Transverse colon (tissue), 4 donors: ENCODE measurements at regions of chr15 and their contacts with region 1.

Region 1: GRCh38 chr15:85388566-85389305 is 8.3 kb downstream of the AKAP13 start:
- DNase-seq: no peak
- H3K4me3 ChIP-seq: no peak overlapping the region
- H3K27ac ChIP-seq: no peak overlapping the region
- H3K4me1 ChIP-seq: peaks cover 3 to 35% (median 9%) of the 10 kb centered on the region in 4 donors
- H3K27me3 ChIP-seq: no peaks in the 10 kb centered on the region
- CTCF ChIP-seq: no peak
- EP300 ChIP-seq: no peak
- POLR2A ChIP-seq: no peak

Region 2: GRCh38 chr15:85318048-85318731 is 70.5 kb before region 1 on chr15:
- in situ Hi-C with region 1: no loop called
- intact Hi-C with region 1: loop called (anchors 2 kb)
- DNase-seq: peak; percentile 84
- H3K4me3 ChIP-seq: no peak overlapping the region
- H3K27ac ChIP-seq: peak overlapping the region; percentile 77 to 87 (median 86)
- H3K4me1 ChIP-seq: peaks cover 13 to 42% (median 33%) of the 10 kb centered on the region in 4 donors
- H3K27me3 ChIP-seq: no peaks in the 10 kb centered on the region
- CTCF ChIP-seq: peak in 2 of 5 experiments; percentile 20 to 37
- EP300 ChIP-seq: no peak
- POLR2A ChIP-seq: peak; percentile 72